Right lobe of liver (tissue), 6 donors: ENCODE measurements at regions of chr1 and their contacts with region 1.

Region 1: DNA sequence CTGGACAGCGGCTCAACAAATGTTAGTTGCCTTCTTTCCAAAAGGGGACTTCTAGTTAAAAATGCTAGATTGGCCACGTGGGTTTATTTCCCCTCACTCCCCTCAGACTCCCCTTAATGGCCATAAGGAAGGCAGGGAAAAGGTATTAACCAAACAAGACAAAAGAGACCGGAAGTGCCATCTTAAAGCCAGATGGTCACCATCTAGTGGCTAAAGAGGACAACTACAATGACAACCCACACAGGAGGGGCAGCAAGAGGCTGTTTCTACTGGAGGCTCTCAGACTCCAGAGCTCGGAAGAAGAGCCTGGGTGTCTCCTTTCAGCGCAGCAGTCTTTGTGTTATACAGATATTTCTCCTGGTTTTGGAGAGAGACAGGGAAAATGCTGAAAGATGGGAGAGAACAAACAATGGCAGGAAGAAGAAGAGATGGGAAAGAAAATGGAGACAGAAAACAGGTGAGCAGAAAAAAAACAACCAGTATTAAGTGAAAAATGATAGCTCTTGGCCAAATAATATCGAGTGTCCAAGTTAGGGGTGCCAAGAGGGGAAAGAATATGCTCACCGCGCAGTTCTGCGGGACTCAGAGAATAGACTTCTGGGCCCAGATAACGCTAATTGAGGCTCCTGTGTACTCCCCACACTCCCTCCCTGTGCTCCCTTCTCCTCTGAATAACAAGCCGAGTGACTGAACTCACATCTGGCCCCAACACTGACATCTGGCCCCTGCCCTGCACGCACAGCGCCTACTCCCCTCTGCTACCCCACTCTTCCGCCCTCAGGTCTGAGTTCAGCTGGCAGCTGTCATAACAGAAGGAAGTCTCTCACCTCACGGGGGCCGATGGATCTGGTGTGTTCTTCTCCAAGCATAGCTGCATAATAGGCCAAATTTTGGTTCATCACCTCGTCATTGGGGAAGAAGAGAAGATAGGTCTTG is 9.6 kb downstream of the P3H1 start:
- DNase-seq: no peak
- ATAC-seq: peak; percentile 83 to 91 (median 90)
- H3K4me3 ChIP-seq: no peak overlapping the region
- H3K27ac ChIP-seq: no peak overlapping the region
- H3K4me1 ChIP-seq: no peaks in the 10 kb centered on the region
- H3K27me3 ChIP-seq: no peaks in the 10 kb centered on the region
- CTCF ChIP-seq: peak; percentile 66 to 76 (median 69)
- POLR2A ChIP-seq: no peak

Region 2: GRCh38 chr1:42146626-42147320 is 610.5 kb before region 1 on chr1:
- intact Hi-C with region 1: loop called in 1 of 2 experiments (anchors 10 kb)
- DNase-seq: peak; percentile 77 to 92 (median 86)
- ATAC-seq: peak; percentile 95 to 98 (median 97)
- H3K4me3 ChIP-seq: no peak overlapping the region
- H3K27ac ChIP-seq: no peak overlapping the region
- H3K4me1 ChIP-seq: peaks cover 0 to 3% (median 0%) of the 10 kb centered on the region in 4 donors
- H3K27me3 ChIP-seq: no peaks in the 10 kb centered on the region
- CTCF ChIP-seq: peak; percentile 82 to 98 (median 85)
- POLR2A ChIP-seq: no peak

Region 3: DNA sequence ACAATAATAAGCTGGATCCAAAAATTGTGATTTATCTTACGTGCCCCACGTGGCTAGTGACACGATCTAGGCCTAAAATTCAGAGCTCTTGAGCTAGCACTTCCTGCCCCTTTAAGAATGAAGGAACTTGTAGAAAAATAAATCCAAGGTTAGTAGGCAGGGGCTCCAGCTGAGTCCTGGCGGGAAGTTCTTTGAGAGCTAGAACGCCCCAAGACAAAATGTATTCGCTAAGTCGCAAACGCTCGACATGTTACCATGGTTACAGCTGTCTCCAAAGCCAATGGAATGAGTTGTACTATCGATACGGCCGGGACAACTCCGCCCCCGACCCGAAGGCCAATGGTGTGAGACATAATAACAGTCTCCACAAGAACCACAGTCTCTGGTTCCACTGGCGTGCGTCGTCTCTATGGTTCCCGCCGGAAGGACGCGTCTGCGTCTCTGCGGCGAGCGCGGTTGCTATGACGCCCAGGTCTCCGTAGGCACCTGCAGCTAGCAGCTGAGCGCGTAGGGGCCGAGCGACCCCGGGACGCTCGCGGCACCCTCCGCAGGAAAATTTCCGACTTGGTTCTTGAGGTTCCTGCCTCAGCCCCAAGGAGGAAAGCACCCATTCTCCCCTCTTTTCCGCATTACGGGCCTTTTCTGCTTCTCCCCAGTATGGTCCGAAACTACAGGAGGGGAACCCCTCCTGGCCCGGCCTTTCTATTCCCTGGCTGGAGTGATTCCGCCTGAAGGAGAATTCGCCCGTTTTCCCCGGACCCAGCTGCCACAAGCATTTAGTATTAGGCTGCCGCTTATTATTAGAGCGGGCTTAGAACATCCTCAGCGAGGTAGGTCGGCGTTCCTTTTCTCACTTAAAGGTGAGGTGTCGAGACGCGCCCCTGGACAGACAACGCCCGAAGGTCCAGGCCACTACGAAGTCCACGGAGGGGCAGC is 294.1 kb before region 1 on chr1 and contains the start of gene CCDC30:
- intact Hi-C with region 1: no loop called
- DNase-seq: peak; percentile 95 to 98 (median 97)
- ATAC-seq: peak; percentile 100
- H3K4me3 ChIP-seq: peak within 1 kb of the TSS; percentile 59 to 71 (median 70)
- H3K27ac ChIP-seq: no peak within 1 kb of the TSS
- H3K4me1 ChIP-seq: peaks cover 0 to 6% (median 0%) of the 10 kb centered on the region in 4 donors
- H3K27me3 ChIP-seq: no peaks in the 10 kb centered on the region
- CTCF ChIP-seq: no peak
- POLR2A ChIP-seq: no peak
- total RNA-seq, gene CCDC30: 0.37 to 1.4 (median 1.0) TPM

Region 4: GRCh38 chr1:42576935-42577334 is 180.3 kb before region 1 on chr1:
- intact Hi-C with region 1: loop called in 1 of 2 experiments (anchors 5 kb)
- DNase-seq: no peak
- ATAC-seq: no peak
- H3K4me3 ChIP-seq: no peak overlapping the region
- H3K27ac ChIP-seq: no peak overlapping the region
- H3K4me1 ChIP-seq: no peaks in the 10 kb centered on the region
- H3K27me3 ChIP-seq: no peaks in the 10 kb centered on the region
- CTCF ChIP-seq: no peak
- POLR2A ChIP-seq: no peak